ENCODE measurements at regions of chr11 and their contacts with region 1.

Region 1: GRCh38 chr11:62169091-62169847 is 20.7 kb upstream of the SCGB1D1 start:
- DNase-seq: no peak
- ATAC-seq: no peak
- H3K4me3 ChIP-seq: no peak overlapping the region
- H3K27ac ChIP-seq: no peak overlapping the region
- H3K4me1 ChIP-seq: no peaks in the 10 kb centered on the region
- H3K27me3 ChIP-seq: peaks cover 18% of the 10 kb centered on the region; the same call in 1 of the 2 replicates
- CTCF ChIP-seq: no peak

Region 2: DNA sequence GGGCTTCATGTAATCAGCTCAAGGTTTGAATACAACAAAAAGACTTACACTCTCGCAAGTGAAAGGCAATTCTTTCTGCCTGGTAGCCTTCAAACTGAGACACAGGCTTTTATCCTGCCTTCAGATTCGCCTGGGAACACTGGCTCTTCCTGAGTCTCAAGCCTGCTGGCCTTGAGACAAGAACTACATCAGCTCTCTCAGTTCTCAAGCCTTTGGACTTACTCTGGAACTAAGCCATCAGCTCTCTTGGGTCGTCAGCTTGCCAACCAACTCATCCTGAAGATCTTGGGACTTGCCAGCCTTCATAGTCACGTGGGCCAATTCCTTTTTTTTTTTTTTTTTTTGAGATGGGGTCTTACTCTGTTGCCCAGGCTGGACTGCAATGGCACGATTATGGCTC is 696.4 kb before region 1 on chr11:
- CTCF ChIA-PET with region 1: no interaction called
- POLR2A ChIA-PET with region 1: no interaction called
- in situ Hi-C with region 1: no loop called
- intact Hi-C with region 1: no loop called
- DNase-seq: no peak
- ATAC-seq: no peak
- H3K4me3 ChIP-seq: no peak overlapping the region
- H3K27ac ChIP-seq: no peak overlapping the region
- H3K4me1 ChIP-seq: no peaks in the 10 kb centered on the region
- H3K27me3 ChIP-seq: no peaks in the 10 kb centered on the region
- CTCF ChIP-seq: no peak

Region 3: GRCh38 chr11:62061351-62062222 is 107.7 kb before region 1 on chr11:
- CTCF ChIA-PET with region 1: no interaction called
- POLR2A ChIA-PET with region 1: no interaction called
- in situ Hi-C with region 1: no loop called
- intact Hi-C with region 1: no loop called
- DNase-seq: no peak
- ATAC-seq: no peak
- H3K4me3 ChIP-seq: no peak overlapping the region
- H3K27ac ChIP-seq: no peak overlapping the region
- H3K4me1 ChIP-seq: no peaks in the 10 kb centered on the region
- H3K27me3 ChIP-seq: no peaks in the 10 kb centered on the region
- CTCF ChIP-seq: no peak

Region 4: GRCh38 chr11:62208785-62209144 is 39.5 kb after region 1 on chr11:
- CTCF ChIA-PET with region 1: no interaction called
- POLR2A ChIA-PET with region 1: no interaction called
- in situ Hi-C with region 1: no loop called
- intact Hi-C with region 1: loop called (anchors 5 kb)
- DNase-seq: no peak
- ATAC-seq: no peak
- H3K4me3 ChIP-seq: no peak overlapping the region
- H3K27ac ChIP-seq: no peak overlapping the region
- H3K4me1 ChIP-seq: no peaks in the 10 kb centered on the region
- H3K27me3 ChIP-seq: no peaks in the 10 kb centered on the region; the same call in 1 of the 2 replicates
- CTCF ChIP-seq: no peak

Region 5: DNA sequence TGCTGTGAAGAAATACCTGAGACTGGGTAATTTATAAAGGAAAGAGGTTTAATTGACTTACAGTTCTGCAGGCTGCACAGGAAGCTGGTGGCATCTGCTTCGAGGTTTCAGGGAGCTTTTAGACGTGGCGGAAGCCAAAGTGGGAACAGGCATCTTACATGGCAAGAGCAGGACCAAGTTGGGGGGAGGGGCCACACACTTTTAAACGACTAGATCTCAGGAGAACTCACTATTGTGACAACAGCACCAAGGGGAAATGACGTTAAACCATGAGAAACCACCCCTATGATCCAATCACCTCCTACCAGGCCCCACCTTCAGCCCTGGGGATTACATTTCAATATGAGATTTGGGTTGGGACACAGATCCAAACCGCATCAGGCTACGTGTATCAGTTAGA is 140.7 kb after region 1 on chr11:
- CTCF ChIA-PET with region 1: no interaction called
- POLR2A ChIA-PET with region 1: no interaction called
- in situ Hi-C with region 1: no loop called
- intact Hi-C with region 1: loop called (anchors 5 kb)
- DNase-seq: no peak
- ATAC-seq: no peak
- H3K4me3 ChIP-seq: no peak overlapping the region
- H3K27ac ChIP-seq: no peak overlapping the region
- H3K4me1 ChIP-seq: no peaks in the 10 kb centered on the region
- H3K27me3 ChIP-seq: no peaks in the 10 kb centered on the region
- CTCF ChIP-seq: no peak

Region 6: GRCh38 chr11:62324738-62325556 is 155.7 kb after region 1 on chr11:
- CTCF ChIA-PET with region 1: no interaction called
- POLR2A ChIA-PET with region 1: interaction called, 5 read pairs
- in situ Hi-C with region 1: no loop called
- intact Hi-C with region 1: loop called (anchors 5 kb)
- DNase-seq: no peak
- ATAC-seq: peak; percentile 96
- H3K4me3 ChIP-seq: no peak overlapping the region
- H3K27ac ChIP-seq: no peak overlapping the region
- H3K4me1 ChIP-seq: no peaks in the 10 kb centered on the region
- H3K27me3 ChIP-seq: no peaks in the 10 kb centered on the region
- CTCF ChIP-seq: peak; percentile 92

Region 7: GRCh38 chr11:62601394-62602140 is 432.3 kb after region 1 on chr11 and contains the start of gene MTA2:
- CTCF ChIA-PET with region 1: no interaction called
- POLR2A ChIA-PET with region 1: interaction called, 11 read pairs
- in situ Hi-C with region 1: no loop called
- intact Hi-C with region 1: no loop called
- DNase-seq: peak; percentile 84
- ATAC-seq: peak; percentile 94
- H3K4me3 ChIP-seq: peak within 1 kb of the TSS; percentile 70 to 76
- H3K27ac ChIP-seq: peak within 1 kb of the TSS; percentile 98
- H3K4me1 ChIP-seq: peaks cover 26% of the 10 kb centered on the region
- H3K27me3 ChIP-seq: no peaks in the 10 kb centered on the region
- CTCF ChIP-seq: no peak
- total RNA-seq, gene MTA2: 163 TPM